ENCODE measurements at regions of chr15 and their contacts with region 1.

Region 1: GRCh38 chr15:90886041-90886614 is 1.8 kb downstream of the FES start:
- DNase-seq: peak; percentile 87
- H3K4me3 Mint-ChIP-seq: peak overlapping the region; percentile 26
- H3K27ac Mint-ChIP-seq: peak overlapping the region; percentile 82
- H3K4me1 Mint-ChIP-seq: peaks cover 32% of the 10 kb centered on the region
- H3K27me3 Mint-ChIP-seq: no peaks in the 10 kb centered on the region

Region 2: GRCh38 chr15:90648137-90649070 is 237.7 kb before region 1 on chr15:
- CTCF ChIA-PET with region 1: interaction called, 78 read pairs
- DNase-seq: peak; percentile 83
- H3K4me3 Mint-ChIP-seq: peak overlapping the region; percentile 29
- H3K27ac Mint-ChIP-seq: peak overlapping the region; percentile 97
- H3K4me1 Mint-ChIP-seq: peaks cover 51% of the 10 kb centered on the region
- H3K27me3 Mint-ChIP-seq: peaks cover 9% of the 10 kb centered on the region

Region 3: GRCh38 chr15:90716976-90717821 is 168.9 kb before region 1 on chr15 and contains the start of gene BLM:
- CTCF ChIA-PET with region 1: interaction called, 13 read pairs
- DNase-seq: peak; percentile 97
- H3K4me3 Mint-ChIP-seq: peak within 1 kb of the TSS; percentile 83
- H3K27ac Mint-ChIP-seq: peak within 1 kb of the TSS; percentile 98
- H3K4me1 Mint-ChIP-seq: peaks cover 37% of the 10 kb centered on the region
- H3K27me3 Mint-ChIP-seq: no peaks in the 10 kb centered on the region

Region 4: DNA sequence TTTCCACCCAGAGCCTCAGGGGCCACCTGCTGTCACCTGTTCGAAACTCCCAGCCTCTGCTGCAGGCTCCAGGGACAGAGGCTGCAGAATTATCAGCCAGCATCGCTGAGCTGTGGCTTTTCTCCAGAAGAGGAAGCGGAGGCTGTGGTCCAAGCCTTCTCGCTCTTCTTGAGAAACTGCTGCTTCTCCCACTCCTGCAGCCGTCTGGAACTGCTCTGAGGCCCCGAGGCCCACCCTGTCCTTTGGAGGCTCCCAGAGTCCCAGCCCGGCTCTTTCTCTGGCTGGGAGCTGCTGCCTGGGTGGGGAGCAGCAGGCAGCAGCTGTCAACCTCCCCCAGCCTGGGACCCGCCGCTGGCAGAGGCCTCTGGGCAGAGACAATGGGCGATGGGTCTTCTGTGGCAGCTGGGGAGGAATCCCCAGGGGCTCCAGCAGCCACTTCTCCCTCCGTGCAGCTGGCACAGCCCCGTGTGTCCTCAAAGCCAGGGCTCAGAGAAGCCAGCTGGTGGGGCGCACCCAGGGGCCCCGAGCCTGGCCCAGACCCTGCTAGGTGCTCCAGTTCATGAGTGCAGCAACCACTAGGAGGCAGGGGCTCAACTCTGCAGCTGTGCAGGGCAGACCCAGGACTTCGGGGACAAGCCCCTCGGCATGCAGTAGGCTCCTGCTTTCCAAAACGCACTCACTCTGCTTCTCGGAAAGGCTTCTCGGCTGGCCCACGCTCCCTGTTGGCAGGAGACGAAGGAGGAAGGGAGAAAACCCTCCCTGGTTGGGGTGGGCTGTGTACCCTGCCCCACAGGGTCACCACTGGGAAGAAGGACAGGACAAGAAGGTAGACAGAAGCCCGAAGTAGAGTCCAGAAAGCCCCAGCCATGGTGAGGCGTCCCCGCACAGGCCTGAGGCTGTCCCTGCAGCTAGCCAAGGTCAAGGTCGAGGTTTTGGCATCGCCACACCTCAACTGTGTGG is 67.6 kb before region 1 on chr15:
- CTCF ChIA-PET with region 1: interaction called, 11 read pairs
- DNase-seq: peak; percentile 41
- H3K4me3 Mint-ChIP-seq: no peak overlapping the region
- H3K27ac Mint-ChIP-seq: peak overlapping the region; percentile 83
- H3K4me1 Mint-ChIP-seq: peaks cover 67% of the 10 kb centered on the region
- H3K27me3 Mint-ChIP-seq: no peaks in the 10 kb centered on the region

Region 5: GRCh38 chr15:90862964-90863778 is 23.0 kb before region 1 on chr15:
- CTCF ChIA-PET with region 1: no interaction called
- DNase-seq: no peak
- H3K4me3 Mint-ChIP-seq: no peak overlapping the region
- H3K27ac Mint-ChIP-seq: no peak overlapping the region
- H3K4me1 Mint-ChIP-seq: peaks cover 39% of the 10 kb centered on the region
- H3K27me3 Mint-ChIP-seq: no peaks in the 10 kb centered on the region

Region 6: DNA sequence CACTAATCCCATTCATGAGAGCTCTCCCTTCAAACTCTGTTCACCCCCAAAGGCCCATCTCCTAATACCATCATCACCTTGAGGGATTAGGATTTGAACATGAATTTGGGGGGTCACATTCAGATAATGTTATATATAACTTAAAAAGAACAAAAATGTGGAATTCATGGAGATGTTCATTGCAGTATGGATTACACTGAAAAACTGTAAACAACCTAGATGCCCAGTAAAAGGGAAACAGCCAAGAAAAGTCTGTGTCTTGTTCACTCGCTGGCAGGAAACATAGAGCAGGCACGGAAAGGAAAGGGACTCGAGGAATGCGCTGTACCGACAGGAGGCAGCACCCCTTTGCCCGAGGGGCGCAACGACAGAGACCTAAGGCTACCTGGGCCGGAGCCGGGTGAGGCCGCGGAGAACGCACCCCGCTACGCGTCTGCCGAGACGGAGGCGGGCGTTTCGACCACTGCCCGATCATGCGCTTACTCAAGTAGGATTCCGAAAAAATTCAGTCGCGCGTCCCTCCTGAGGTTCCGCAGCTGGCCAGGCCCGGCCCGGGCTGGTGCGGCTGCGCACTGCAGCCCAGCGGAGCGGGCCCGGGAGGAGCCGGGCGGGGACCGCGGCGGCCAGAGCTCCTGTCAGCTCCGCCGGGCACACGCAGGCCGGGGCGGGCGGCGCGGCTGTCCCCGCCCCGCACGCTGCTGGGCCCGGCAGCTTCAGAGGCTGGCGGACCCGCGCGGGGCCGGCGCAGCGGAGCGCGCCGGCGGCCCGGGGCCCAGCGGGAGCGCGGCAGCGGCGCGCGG is 16.1 kb after region 1 on chr15:
- CTCF ChIA-PET with region 1: interaction called, 26 read pairs
- DNase-seq: peak; percentile 81
- H3K4me3 Mint-ChIP-seq: peak overlapping the region; percentile 86
- H3K27ac Mint-ChIP-seq: peak overlapping the region; percentile 94
- H3K4me1 Mint-ChIP-seq: peaks cover 35% of the 10 kb centered on the region
- H3K27me3 Mint-ChIP-seq: peaks cover 4% of the 10 kb centered on the region